IMR-90 (cell line): ENCODE measurements at regions of chr12 and their contacts with region 1.

Region 1: GRCh38 chr12:95102916-95103671 is 29.7 kb upstream of the NR2C1 start:
- DNase-seq: peak; percentile 94
- ATAC-seq: peak; percentile 79
- H3K4me3 ChIP-seq: no peak overlapping the region
- H3K27ac ChIP-seq: no peak overlapping the region
- H3K4me1 ChIP-seq: peaks cover 5% of the 10 kb centered on the region
- H3K27me3 ChIP-seq: no peaks in the 10 kb centered on the region
- CTCF ChIP-seq: no peak
- POLR2A ChIP-seq: no peak
- RAD21 ChIP-seq: no peak

Region 2: DNA sequence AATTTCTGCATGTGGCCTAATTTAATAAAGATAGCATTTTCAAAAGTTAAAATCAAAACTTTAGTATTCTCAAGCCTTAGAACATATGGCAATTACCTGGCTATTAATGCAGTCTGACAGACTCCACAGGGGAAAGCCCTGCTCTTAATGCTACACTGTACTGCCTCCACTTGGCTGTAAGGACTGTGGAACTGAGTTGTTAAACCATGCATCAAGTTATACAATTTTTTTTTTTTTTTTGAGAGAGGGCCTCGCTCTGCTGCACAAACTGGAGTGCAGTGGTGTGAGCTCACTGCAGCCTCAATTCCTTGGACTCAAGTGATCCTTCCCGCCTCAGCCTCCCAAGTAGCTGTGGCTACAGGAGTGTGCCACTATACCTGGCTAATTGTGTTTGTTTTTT is 80.6 kb before region 1 on chr12:
- CTCF ChIA-PET with region 1: no interaction called
- POLR2A ChIA-PET with region 1: no interaction called
- dilution Hi-C with region 1: no loop called
- in situ Hi-C with region 1: no loop called
- intact Hi-C with region 1: no loop called
- DNase-seq: no peak
- ATAC-seq: no peak
- H3K4me3 ChIP-seq: no peak overlapping the region
- H3K27ac ChIP-seq: no peak overlapping the region
- H3K4me1 ChIP-seq: no peaks in the 10 kb centered on the region
- H3K27me3 ChIP-seq: no peaks in the 10 kb centered on the region
- CTCF ChIP-seq: no peak
- POLR2A ChIP-seq: no peak
- RAD21 ChIP-seq: no peak

Region 3: DNA sequence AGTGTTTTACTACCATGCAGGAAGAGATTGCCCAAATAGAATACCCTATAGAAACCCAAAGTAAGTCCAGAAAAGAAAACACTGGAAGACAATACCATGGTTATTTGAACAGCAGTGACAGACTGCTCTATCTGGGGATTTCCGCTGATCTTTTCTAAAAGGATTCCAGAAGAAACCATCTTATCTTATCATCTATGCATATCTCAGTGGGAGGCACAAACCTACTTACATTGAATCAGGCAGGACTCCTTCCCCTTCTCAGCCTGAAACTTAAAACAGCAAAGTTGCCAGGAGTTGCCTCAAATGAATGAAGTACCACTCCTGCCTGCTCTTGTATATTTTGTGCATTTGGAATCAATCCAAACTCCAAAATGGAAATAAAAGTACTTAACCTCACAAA is 27.0 kb after region 1 on chr12:
- CTCF ChIA-PET with region 1: no interaction called
- POLR2A ChIA-PET with region 1: no interaction called
- dilution Hi-C with region 1: no loop called
- in situ Hi-C with region 1: no loop called
- intact Hi-C with region 1: loop called (anchors 2 kb)
- DNase-seq: peak; percentile 59
- ATAC-seq: no peak
- H3K4me3 ChIP-seq: no peak overlapping the region
- H3K27ac ChIP-seq: no peak overlapping the region
- H3K4me1 ChIP-seq: no peaks in the 10 kb centered on the region
- H3K27me3 ChIP-seq: no peaks in the 10 kb centered on the region
- CTCF ChIP-seq: no peak
- POLR2A ChIP-seq: no peak
- RAD21 ChIP-seq: no peak